ENCODE measurements at regions of chr4 and their contacts with region 1.

Region 1: DNA sequence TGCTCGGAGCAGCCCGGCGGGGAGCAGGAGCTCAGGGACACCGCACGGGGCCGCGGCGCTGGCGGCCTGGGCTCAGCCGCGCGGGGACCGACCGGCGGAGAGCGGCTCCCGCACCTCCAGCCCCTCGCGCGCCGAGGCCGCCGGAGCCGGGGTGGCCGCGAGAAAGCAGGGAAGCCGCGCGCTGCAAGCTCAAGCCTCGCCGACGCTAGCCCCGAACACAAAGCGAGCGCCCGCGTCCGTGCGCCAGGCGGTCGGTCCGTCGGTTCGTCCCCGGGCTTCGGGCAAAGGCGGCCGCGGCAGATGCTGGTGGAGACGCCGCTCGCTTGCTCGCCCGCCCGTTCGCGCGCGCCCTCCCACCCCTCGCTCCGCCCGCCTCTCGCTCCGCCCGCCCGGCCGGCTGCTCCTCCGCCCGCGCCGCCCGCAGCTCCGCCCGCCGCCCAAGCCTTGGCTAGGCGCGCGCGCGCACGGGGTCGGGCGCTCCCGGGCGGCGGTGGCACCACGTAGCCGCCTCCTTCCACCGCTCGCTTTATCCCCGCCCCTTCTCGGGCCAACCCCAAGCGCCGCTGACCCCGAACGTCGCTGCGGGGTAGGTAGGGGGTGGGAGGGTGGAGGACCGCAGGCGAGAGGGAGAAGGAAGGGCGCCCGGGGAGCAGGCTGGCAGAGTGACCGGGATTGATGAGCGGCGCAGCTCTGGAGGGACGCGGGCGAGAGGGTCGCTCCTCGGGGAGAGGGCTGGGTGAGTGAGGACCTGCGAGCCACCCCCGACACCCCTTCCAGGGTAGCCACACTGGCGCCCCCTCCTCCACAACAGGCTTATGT is at the start of gene TSPAN5:
- DNase-seq: peak; percentile 70
- H3K4me3 ChIP-seq: peak within 1 kb of the TSS; percentile 50 to 63
- H3K27ac ChIP-seq: peak within 1 kb of the TSS; percentile 62 to 73
- H3K4me1 ChIP-seq: no peaks in the 10 kb centered on the region
- H3K27me3 ChIP-seq: no peaks in the 10 kb centered on the region
- CTCF ChIP-seq: no peak
- POLR2A ChIP-seq: no peak
- total RNA-seq, gene TSPAN5: 7.9 to 48.5 TPM

Region 2: GRCh38 chr4:98467627-98468072 is 190.8 kb before region 1 on chr4:
- intact Hi-C with region 1: loop called (anchors 2 kb)
- DNase-seq: peak; percentile 75
- H3K4me3 ChIP-seq: peak overlapping the region; percentile 14 to 24
- H3K27ac ChIP-seq: no peak overlapping the region
- H3K4me1 ChIP-seq: no peaks in the 10 kb centered on the region
- H3K27me3 ChIP-seq: no peaks in the 10 kb centered on the region
- CTCF ChIP-seq: peak; percentile 61 to 77 (median 76)
- POLR2A ChIP-seq: no peak

Measured in prostate gland (tissue), 2 donors.